ENCODE measurements at regions of chr5 and their contacts with region 1.

Region 1: GRCh38 chr5:38250763-38251448 is 7.5 kb upstream of the EGFLAM start:
- DNase-seq: no peak
- H3K4me3 ChIP-seq: no peak overlapping the region
- H3K27ac ChIP-seq: no peak overlapping the region
- H3K4me1 ChIP-seq: no peaks in the 10 kb centered on the region
- H3K27me3 ChIP-seq: peaks cover 0 to 5% of the 10 kb centered on the region in 2 experiments
- CTCF ChIP-seq: no peak
- POLR2A ChIP-seq: no peak

Region 2: GRCh38 chr5:38265546-38266179 is 14.8 kb after region 1 on chr5:
- CTCF ChIA-PET with region 1: interaction called, 18 read pairs
- POLR2A ChIA-PET with region 1: no interaction called
- dilution Hi-C with region 1: no loop called
- intact Hi-C with region 1: no loop called
- DNase-seq: peak; percentile 56
- H3K4me3 ChIP-seq: no peak overlapping the region
- H3K27ac ChIP-seq: no peak overlapping the region
- H3K4me1 ChIP-seq: no peaks in the 10 kb centered on the region
- H3K27me3 ChIP-seq: peaks cover 19 to 26% of the 10 kb centered on the region in 2 experiments
- CTCF ChIP-seq: peak; percentile 73 to 78
- POLR2A ChIP-seq: no peak

Measured in endothelial cell of umbilical vein (primary cell).